Activated B cell treated with CpG ODN at 0.5 μM for 24 hours (primary cell): ENCODE measurements at regions of chr6 and their contacts with region 1.

Region 1: DNA sequence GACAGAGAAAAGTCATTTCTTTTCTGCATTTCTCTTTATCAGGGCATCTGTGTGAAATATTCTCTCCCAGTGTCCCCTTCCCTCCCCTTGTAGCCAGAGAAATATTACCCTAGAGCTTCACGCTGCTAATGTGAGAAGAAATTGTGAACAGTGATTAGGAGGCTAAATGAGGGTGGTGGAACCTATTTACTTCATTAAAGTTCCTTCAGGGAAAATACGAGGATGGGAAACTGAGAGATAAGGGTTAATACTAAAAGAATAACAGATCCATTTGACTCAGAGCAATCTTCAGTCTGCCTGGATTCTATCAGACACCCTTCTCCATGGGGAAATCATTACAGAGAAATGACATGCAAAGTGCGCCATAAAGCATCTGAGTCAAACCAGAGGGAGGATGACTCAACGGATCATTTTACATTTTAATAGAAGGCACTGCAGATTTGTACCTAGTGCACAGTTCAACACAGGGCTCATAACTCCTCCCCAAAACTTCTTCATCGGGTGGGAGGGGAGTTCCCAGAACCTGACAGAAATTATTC is 131.3 kb downstream of the GJA10 start:
- DNase-seq: no peak
- ATAC-seq: peak; percentile 97
- H3K4me3 Mint-ChIP-seq: peak overlapping the region; percentile 44
- H3K27ac Mint-ChIP-seq: peak overlapping the region; percentile 67
- H3K4me1 Mint-ChIP-seq: peaks cover 68% of the 10 kb centered on the region
- H3K27me3 Mint-ChIP-seq: no peaks in the 10 kb centered on the region
- CTCF ChIP-seq: no peak

Region 2: DNA sequence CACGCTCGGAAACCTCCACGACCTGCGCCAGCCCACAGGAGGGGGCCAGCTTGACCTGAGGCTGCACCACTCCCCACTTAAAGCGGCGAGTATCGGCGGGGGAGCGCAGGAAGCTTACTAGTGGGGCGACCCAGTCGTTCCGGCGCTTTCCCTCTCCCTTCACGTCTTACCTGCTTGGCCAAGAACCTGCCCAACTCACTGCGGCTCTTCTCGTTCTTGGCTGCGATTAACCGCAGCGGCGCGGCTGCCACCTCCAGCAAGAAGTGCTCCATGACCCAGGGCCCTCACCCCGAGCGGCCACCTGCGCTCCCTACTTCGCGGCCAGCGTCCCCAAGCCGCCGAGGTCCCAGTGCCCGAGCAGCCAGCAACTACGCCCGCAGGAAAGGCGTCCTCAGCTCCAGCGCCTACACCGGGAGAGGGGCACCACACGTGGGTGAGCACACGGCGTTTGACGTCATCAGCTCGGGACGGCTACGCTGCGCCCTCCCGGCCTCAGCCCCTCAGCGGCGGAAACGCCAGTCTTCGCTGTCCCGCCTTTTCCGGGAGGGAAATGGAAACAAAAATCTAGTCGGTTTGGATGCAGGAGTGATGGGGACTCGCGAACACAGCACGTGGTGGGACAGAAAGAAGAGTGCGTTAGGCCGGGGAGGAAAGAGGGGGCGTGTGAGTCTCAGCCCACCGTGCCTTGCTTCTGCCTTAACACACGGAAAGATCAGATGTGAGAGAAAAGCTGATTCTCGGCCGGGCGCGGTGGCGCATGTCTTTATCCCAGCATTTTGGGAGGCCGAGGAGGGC is 206.1 kb before region 1 on chr6 and contains the start of gene MDN1:
- CTCF ChIA-PET with region 1: no interaction called
- POLR2A ChIA-PET with region 1: no interaction called
- intact Hi-C with region 1: no loop called
- DNase-seq: peak; percentile 76
- ATAC-seq: peak; percentile 94
- H3K4me3 Mint-ChIP-seq: peak within 1 kb of the TSS; percentile 95
- H3K27ac Mint-ChIP-seq: peak within 1 kb of the TSS; percentile 95
- H3K4me1 Mint-ChIP-seq: peaks cover 33% of the 10 kb centered on the region
- H3K27me3 Mint-ChIP-seq: no peaks in the 10 kb centered on the region
- CTCF ChIP-seq: no peak
- total RNA-seq, gene MDN1: 59.8 and 65.4 TPM in 2 replicates

Region 3: GRCh38 chr6:90008908-90009501 is 16.6 kb before region 1 on chr6:
- CTCF ChIA-PET with region 1: no interaction called
- POLR2A ChIA-PET with region 1: no interaction called
- intact Hi-C with region 1: loop called (anchors 2 kb)
- DNase-seq: no peak
- ATAC-seq: peak; percentile 37
- H3K4me3 Mint-ChIP-seq: peak overlapping the region; percentile 37
- H3K27ac Mint-ChIP-seq: peak overlapping the region; percentile 88
- H3K4me1 Mint-ChIP-seq: peaks cover 29% of the 10 kb centered on the region
- H3K27me3 Mint-ChIP-seq: no peaks in the 10 kb centered on the region
- CTCF ChIP-seq: no peak

Region 4: DNA sequence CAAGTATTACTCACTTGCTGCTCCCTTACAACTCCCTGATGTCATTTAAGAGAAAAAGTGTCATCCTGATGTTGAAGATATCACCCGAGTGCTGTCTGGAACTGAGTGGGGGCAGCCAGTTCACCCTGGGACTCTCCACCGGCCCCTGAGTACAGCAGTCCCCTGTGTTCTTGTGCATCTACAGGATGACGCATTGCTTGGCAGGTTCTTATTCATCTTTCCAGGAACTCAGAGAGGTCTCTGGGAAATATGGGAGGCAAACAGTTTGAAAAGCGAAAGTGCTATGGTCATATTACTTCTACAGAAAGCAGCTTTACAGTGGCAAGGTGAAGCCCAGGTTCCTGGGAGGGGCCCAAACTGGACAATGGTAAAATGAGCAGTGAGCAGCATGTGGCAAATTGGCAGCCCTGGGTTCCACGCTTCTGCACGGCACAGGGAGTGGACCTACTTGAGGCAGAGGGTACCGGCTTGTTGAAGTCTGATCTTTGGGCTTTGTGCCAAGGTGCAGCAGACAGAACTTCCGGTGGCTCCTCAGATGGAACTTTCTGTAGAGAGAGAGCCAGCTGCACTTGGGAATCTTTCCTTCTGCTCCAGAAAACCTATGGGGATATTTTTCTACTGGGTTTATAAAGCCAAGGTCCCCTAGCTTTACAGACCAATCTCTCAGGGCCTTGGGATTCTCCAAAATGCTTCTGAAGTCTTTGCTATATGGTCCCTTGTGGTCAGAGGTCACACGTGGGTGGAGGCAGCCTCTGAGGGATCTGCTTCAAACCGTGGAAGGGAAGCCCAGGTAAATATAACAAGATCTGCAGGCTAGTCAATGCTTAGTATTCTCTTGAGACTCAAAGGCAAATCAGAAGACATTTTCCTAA is 433.0 kb after region 1 on chr6:
- CTCF ChIA-PET with region 1: no interaction called
- POLR2A ChIA-PET with region 1: no interaction called
- intact Hi-C with region 1: no loop called
- DNase-seq: no peak
- ATAC-seq: no peak
- H3K4me3 Mint-ChIP-seq: no peak overlapping the region
- H3K27ac Mint-ChIP-seq: no peak overlapping the region
- H3K4me1 Mint-ChIP-seq: peaks cover 8% of the 10 kb centered on the region
- H3K27me3 Mint-ChIP-seq: no peaks in the 10 kb centered on the region
- CTCF ChIP-seq: no peak